HEK293T (cell line): ENCODE measurements at regions of chr16 and their contacts with region 1.

Region 1: DNA sequence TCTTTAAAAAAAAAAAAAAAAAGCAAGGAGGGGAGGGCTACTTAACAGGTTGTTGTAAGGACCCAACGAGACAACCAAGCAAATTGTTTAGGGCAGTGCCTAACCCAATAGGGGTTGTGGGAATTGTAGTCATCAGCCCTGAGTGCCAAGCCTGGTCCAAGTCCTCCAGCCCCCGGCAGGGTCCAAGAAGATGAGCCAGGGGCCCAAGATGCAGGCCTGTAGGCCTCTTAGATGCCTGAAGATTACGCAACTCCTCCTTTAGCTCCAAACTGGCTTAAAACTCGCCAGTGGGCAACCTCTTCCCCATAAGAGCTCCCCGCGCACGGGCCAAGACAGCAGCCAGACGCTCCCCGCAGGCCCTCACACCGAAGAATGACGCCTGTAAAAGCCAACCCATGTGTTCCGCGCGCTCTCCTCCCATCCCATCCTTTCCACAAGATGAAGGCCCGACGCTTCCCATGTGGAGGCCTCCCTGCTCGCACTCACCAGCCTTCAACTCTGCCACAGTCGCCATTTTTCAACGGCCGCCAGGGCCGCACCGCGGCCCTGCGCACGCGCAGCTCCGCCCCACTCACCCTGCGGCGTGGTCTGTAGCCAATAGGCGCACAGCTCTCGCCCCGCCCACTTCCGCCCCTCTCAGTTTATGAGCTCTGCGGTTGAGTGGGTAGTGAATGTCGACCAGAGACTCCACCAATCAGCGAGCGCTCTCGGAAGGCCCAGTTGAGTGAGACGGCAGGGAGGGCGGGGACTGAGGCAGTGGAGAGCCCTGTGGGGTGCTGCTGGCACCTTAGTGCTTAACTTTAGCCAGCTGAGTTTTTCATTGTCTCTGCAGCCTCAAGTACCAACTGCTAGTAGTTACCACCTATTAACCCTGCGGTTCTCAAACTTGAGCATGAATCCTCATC is at the start of gene CEP20:
- DNase-seq: peak; percentile 100

Region 2: GRCh38 chr16:15874745-15875314 is 13.5 kb before region 1 on chr16:
- CTCF ChIA-PET with region 1: interaction called, 7 read pairs
- POLR2A ChIA-PET with region 1: interaction called, 15 read pairs
- DNase-seq: peak; percentile 60

Region 3: DNA sequence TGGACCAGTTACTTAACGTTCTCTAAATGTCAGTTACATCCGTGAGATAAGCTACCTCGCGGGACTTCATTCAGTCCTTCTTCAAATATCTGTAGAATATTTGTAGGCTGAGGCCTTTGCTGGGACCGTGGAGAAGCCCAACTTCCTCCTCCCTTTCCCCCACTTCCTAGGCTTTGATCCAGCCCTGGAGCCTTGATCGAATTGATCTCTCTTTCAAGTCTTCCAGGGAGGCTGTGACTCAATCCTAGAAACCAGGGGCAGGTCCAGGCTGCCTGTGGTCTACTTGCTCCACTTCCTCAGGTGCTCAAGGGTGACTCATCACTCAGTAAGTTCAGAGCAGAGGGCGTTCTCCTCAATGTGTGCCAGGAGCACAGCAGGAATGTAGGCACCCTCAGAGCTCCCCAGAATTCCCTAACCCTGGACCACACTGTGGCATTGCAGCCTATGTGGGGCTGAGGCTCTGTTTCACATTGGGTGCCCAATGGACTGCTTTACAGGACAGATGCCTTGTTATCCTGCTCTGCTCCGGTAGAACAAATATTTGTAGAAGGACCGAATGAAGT is 11.3 kb after region 1 on chr16:
- CTCF ChIA-PET with region 1: no interaction called
- POLR2A ChIA-PET with region 1: interaction called, 22 read pairs
- DNase-seq: no peak